ENCODE measurements at regions of chr14 and their contacts with region 1.

Region 1: DNA sequence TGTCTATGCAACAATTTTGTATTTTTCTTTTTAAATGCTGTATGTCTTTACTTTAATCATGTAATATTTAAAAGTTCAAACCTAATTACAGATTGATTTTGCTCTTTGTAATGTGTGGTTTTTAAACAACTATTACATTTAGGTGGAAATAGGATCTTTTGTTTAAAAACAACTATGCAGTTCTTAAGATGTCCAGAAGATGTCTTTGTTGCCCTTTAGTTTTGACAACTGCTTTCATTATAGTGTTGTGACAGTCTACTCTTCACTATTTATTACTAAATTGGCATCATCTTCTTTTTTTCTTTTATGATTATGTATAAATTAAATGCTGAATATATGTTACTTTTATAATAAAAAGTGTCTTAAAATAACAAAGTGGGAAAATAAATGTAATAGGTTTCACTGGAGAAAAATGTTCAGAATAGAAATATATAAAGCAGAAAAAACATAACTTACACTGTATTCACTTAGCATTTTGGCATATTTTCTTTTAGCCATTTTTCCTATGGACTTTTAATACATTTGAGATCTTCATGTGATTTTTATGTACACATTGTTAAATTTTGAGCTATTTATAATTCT is 27.1 kb upstream of the PCNX4 start:
- DNase-seq: peak in 1 of 2 donors; percentile 40
- H3K4me3 ChIP-seq: no peak overlapping the region
- H3K27ac ChIP-seq: no peak overlapping the region
- H3K4me1 ChIP-seq: no peaks in the 10 kb centered on the region
- H3K27me3 ChIP-seq: no peaks in the 10 kb centered on the region
- CTCF ChIP-seq: peak in 5 of 7 experiments; percentile 22 to 41 (median 32)
- EP300 ChIP-seq: no peak
- POLR2A ChIP-seq: no peak

Region 2: DNA sequence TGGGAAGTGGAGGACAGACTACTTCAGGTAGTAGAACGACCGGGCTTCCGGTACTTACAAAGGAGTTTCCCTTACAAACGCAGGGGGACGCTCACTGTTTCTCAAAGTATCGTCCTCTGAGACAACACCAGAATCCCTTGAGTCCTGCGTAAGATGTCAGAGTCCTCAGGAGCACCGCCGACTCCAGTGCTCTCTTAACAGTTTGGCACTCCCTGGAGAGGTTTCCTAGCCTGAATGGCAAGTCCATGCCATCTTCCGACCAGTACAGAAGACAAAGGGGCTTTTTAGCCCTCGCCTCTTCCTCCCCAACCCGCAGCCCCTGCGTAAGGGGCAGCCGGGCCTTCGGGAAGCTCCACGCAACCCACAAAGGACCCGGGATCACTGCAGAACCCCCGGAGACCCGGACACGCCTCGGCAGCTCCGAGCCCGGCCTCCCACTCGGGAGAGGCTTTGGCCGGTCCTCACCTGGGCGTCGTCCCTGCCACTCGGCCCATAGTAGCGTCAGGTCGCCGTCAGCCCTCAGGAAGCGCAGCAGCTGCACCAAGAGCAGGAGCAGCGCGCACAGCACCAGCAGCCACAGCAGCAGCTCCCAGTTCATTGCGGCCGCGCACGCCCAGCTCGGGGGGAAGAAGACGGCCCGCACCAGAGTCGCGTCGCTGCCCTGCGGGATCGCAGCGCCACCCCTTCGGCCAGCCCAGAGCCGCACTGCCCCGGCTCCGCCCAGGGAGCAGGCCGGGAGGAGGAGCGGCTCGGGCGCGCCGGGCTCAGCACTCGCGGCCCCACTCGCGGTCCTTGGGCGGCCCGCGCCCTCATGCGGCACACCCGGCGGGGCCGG is 100.3 kb after region 1 on chr14 and contains the start of gene DHRS7:
- intact Hi-C with region 1: no loop called
- DNase-seq: peak; percentile 85 to 95
- H3K4me3 ChIP-seq: peak within 1 kb of the TSS; percentile 76 to 84 (median 79)
- H3K27ac ChIP-seq: peak within 1 kb of the TSS; percentile 90 to 99 (median 96)
- H3K4me1 ChIP-seq: peaks cover 7 to 57% (median 27%) of the 10 kb centered on the region in 4 donors
- H3K27me3 ChIP-seq: no peaks in the 10 kb centered on the region
- CTCF ChIP-seq: peak in 4 of 7 experiments; percentile 16 to 52 (median 50)
- EP300 ChIP-seq: no peak
- POLR2A ChIP-seq: no peak
- total RNA-seq, gene DHRS7: 60.7 to 322 (median 158) TPM

Region 3: DNA sequence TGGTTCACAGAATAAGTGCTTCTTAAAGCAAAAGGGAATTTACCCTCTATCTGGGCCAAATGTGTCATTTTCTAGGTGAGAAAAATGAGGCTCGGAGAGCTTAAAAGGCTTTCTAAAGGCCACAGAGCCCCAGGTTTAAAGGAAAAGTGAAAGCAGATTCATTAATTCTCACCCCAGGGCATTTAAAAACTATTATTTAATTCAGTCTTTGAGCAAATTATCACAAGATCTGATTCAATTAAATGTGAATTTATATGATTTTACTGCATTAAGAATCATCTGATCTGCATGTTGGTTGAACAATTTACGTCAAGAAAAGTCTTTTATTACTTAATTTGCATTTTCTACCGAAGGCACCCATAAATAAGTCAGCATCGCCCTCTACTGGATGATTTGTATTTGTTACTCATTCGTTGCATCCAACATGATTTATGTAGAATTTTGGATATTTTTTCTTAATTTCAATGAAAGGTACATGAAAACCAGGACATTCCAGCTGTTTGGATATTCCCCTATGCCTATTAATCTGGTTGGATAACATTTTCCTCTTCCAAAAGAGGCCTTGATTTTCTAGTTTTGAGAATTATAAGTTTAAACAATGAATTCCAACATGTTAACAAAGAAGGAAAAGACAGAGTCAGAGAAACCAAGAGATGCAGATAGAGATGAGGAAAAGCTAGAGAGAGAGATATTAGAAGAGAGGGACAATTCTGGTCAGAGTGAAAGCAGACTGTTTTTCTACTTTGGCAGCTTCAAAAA is 119.7 kb after region 1 on chr14:
- intact Hi-C with region 1: loop called (anchors 10 kb)
- DNase-seq: peak in 1 of 2 donors; percentile 89
- H3K4me3 ChIP-seq: peak overlapping the region; percentile 34 to 40 (median 38)
- H3K27ac ChIP-seq: peak overlapping the region in 4 of 5 donors; percentile 43 to 81 (median 53)
- H3K4me1 ChIP-seq: peaks cover 0 to 10% (median 4%) of the 10 kb centered on the region in 4 donors
- H3K27me3 ChIP-seq: no peaks in the 10 kb centered on the region
- CTCF ChIP-seq: peak in 5 of 7 experiments; percentile 36 to 82 (median 51)
- EP300 ChIP-seq: no peak
- POLR2A ChIP-seq: no peak